Psoas muscle (tissue), 8 donors: ENCODE measurements at regions of chr1 and their contacts with region 1.

Region 1: DNA sequence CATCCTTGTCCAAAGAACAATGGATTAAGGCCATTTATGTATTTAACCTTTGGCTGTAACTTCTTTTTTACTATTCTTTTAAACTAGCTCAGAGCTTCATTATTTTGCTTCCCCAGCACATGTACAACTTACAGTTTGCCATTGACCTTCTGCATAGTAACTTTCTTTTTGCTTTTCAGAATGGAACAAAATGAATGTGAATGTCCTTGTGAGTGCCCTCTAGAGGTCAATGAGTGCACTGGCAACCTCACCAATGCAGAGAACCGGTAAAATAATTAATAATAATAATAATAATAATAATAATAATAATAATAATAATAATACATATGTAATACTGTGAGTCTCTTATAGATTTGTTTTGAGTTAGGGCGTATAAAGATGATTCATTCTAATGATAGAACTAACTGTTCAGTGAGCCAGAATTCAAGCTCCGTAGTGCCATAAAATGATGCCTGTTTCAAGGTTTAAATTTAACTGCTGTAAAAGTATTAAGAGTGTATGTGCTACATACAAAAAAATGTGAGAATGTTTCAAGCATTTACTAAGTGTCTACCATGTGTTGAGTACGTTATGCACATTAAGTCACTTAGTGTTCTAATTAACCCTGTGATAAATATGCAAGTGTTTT is 69.0 kb upstream of the RAVER2 start:
- DNase-seq: no peak
- ATAC-seq: no peak
- H3K4me3 ChIP-seq: no peak overlapping the region
- H3K27ac ChIP-seq: no peak overlapping the region
- H3K4me1 ChIP-seq: no peaks in the 10 kb centered on the region
- H3K27me3 ChIP-seq: no peaks in the 10 kb centered on the region
- CTCF ChIP-seq: peak; percentile 69

Region 2: GRCh38 chr1:64268653-64269557 is 406.9 kb before region 1 on chr1:
- intact Hi-C with region 1: loop called (anchors 5 kb)
- DNase-seq: peak; percentile 45 to 50
- ATAC-seq: peak; percentile 80 to 92 (median 81)
- H3K4me3 ChIP-seq: no peak overlapping the region
- H3K27ac ChIP-seq: no peak overlapping the region
- H3K4me1 ChIP-seq: no peaks in the 10 kb centered on the region
- H3K27me3 ChIP-seq: no peaks in the 10 kb centered on the region
- CTCF ChIP-seq: peak; percentile 84

Region 3: GRCh38 chr1:64549464-64550239 is 126.2 kb before region 1 on chr1:
- intact Hi-C with region 1: loop called in 1 of 2 experiments (anchors 1 kb)
- DNase-seq: no peak
- ATAC-seq: peak; percentile 37 to 70 (median 50)
- H3K4me3 ChIP-seq: no peak overlapping the region
- H3K27ac ChIP-seq: no peak overlapping the region
- H3K4me1 ChIP-seq: peaks cover 20% of the 10 kb centered on the region
- H3K27me3 ChIP-seq: no peaks in the 10 kb centered on the region
- CTCF ChIP-seq: no peak

Region 4: GRCh38 chr1:64616039-64616438 is 59.8 kb before region 1 on chr1:
- intact Hi-C with region 1: no loop called
- DNase-seq: no peak
- ATAC-seq: peak; percentile 98 to 99 (median 98)
- H3K4me3 ChIP-seq: peak overlapping the region; percentile 13
- H3K27ac ChIP-seq: peak overlapping the region; percentile 82
- H3K4me1 ChIP-seq: peaks cover 17% of the 10 kb centered on the region
- H3K27me3 ChIP-seq: no peaks in the 10 kb centered on the region
- CTCF ChIP-seq: no peak